Left colon (tissue), 2 donors: ENCODE measurements at regions of chr6 and their contacts with region 1.

Region 1: DNA sequence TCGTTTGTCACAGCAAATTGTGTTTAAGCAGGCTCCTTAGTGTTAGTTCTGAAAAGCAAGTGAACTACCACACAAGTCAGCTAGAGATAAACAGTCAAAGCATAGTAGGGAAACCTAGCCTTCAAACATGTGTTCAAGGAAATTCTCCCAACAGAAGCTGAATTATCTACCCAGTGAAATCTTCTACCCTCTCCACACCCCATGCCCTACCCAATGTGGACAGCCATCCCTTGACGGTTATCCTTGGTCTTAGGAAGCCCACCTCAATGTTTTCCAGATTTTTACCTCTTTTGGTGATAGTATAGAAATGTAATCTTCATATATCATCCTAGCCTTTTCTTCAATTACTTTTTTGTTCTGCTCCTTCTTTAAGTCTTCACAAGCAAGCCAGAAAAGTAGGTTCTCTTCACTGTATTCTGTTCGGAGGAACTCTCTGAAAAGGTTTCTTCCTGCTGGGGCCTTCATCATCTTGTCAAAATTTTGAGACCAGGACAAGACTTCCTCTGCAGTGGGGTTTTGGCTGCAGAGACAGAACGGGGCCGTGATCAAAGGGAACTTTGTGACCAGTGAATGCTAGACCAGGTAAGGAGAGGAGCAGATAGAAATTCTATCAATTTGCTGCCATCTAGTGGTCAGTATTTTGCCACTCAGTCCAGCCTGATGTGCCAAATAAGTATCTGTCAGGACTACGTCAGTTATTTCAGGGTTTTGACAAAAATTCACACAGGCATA is 21.6 kb upstream of the MTRF1L start:
- DNase-seq: peak in 1 of 2 donors; percentile 11
- ATAC-seq: peak; percentile 80

Region 2: GRCh38 chr6:152863618-152864326 is 160.4 kb before region 1 on chr6:
- intact Hi-C with region 1: loop called in 1 of 2 experiments (anchors 10 kb)
- DNase-seq: peak; percentile 37 to 75
- ATAC-seq: peak; percentile 65

Region 3: DNA sequence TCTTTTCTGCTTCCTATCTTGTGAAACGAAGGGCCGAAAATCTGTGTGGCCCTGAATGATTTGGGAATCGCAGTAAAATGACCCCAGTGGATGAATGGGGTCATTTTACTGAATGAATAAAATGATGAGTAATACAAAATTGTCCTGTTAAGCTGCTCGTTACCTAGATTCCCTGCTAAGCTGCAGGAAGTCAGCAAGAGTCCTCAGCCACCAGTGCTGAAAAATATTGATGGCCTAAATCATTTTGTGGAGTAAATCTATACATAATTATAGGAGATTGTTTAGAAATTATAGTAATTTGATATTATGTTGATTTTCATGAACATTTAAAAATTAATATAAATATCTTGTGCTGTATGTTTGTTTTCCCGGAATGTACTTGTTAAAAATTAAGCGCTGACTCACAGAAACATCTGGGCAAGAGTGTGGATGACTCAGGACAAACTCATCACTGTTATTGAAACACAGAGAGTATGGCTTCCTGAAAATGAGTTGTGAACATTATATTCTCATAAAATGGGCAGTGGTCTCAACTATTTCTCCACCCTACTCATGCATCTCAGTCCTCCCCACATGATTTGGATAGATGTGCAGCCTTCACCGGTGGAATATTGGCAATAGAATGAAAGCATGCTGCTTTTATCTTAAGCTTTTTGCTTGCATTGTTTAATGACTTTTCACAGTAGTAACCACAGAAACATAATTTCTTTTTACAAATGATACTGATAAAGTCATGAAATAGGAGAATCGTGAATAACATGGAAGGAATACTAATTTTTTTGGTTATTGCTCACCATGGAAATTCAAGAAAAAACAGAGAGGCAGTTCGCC is 143.1 kb after region 1 on chr6:
- intact Hi-C with region 1: no loop called
- DNase-seq: no peak
- ATAC-seq: no peak